ENCODE measurements at regions of chr1 and their contacts with region 1.

Region 1: GRCh38 chr1:110243574-110243973 is 33.5 kb downstream of the KCNC4 start:
- DNase-seq: peak; percentile 78
- H3K4me3 Mint-ChIP-seq: no peak overlapping the region
- H3K27ac Mint-ChIP-seq: peak overlapping the region; percentile 16
- H3K4me1 Mint-ChIP-seq: peaks cover 24% of the 10 kb centered on the region
- H3K27me3 Mint-ChIP-seq: no peaks in the 10 kb centered on the region

Region 2: GRCh38 chr1:110420874-110421793 is 177.6 kb after region 1 on chr1:
- CTCF ChIA-PET with region 1: interaction called, 12 read pairs
- intact Hi-C with region 1: no loop called
- DNase-seq: peak; percentile 9
- H3K4me3 Mint-ChIP-seq: no peak overlapping the region
- H3K27ac Mint-ChIP-seq: no peak overlapping the region
- H3K4me1 Mint-ChIP-seq: no peaks in the 10 kb centered on the region
- H3K27me3 Mint-ChIP-seq: no peaks in the 10 kb centered on the region